Dendritic cell treated with granulocyte-macrophage colony-stimulating factor and Interleukin-4, amounts not matched to agents 40 ng/mL and 50 ng/mL, for 4 days (primary cell): ENCODE measurements at regions of chr5 and their contacts with region 1.

Region 1: DNA sequence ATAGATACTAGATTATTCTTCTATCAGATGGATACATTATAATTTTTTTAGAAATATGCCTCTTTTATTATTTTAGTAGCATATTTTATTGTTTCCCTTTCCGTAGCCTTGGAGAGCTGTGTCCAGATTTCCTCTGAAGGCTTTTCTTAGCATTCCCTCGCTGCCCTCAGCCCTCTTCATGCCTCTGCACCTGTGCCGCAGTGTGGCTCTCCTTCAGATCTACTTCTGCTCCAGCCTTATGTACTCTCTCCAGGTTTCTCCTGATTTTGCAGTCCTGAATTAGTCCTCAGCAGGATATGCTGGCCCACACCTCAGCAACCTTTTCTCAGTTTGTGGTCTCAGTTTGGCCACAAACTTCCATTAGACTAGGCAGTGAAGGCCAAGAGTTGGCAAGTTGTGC is 1052.0 kb downstream of the TAF11L14 start:
- H3K4me3 Mint-ChIP-seq: no peak overlapping the region
- H3K27ac Mint-ChIP-seq: no peak overlapping the region
- H3K4me1 Mint-ChIP-seq: no peaks in the 10 kb centered on the region
- H3K27me3 Mint-ChIP-seq: no peaks in the 10 kb centered on the region

Region 2: GRCh38 chr5:18465833-18466591 is 220.2 kb before region 1 on chr5:
- intact Hi-C with region 1: loop called (anchors 2 kb)
- H3K4me3 Mint-ChIP-seq: no peak overlapping the region
- H3K27ac Mint-ChIP-seq: no peak overlapping the region
- H3K4me1 Mint-ChIP-seq: no peaks in the 10 kb centered on the region
- H3K27me3 Mint-ChIP-seq: no peaks in the 10 kb centered on the region